Mammary epithelial cell (primary cell): ENCODE measurements at regions of chr3 and their contacts with region 1.

Region 1: GRCh38 chr3:171690281-171690680 is 120.0 kb downstream of the PLD1 start:
- DNase-seq: no peak
- H3K4me3 ChIP-seq: no peak overlapping the region
- H3K27ac ChIP-seq: no peak overlapping the region
- H3K4me1 ChIP-seq: no peaks in the 10 kb centered on the region
- H3K27me3 ChIP-seq: no peaks in the 10 kb centered on the region
- CTCF ChIP-seq: no peak

Region 2: DNA sequence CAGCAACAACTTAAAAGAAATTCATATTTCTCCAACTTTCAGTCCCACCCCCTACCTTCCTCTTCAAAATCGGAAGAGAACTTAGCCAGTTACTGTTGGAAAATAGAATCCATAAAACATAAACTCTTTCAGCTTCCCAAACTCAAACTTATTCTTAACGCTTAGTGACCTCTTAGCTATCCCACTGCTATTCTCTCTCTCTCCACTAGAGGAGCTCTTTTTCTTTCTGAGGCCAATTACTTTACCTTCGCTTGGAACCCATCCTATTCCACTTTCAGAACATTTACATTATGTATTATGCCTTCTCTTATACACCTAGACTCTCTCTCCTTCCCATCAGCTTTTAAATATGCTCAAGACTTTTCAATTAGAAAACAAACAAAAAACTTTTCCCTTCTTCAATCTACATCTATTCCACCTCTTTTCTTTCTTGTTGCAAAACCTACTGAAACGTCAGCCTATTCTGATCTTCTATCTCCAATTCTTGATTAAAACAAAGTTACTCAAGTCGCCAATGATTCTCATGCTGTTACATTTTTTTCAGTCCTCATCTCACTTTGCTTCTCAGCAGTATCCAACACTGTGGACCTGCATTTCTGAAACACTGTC is 771.4 kb after region 1 on chr3:
- CTCF ChIA-PET with region 1: interaction called, 17 read pairs
- dilution Hi-C with region 1: no loop called
- in situ Hi-C with region 1: no loop called
- intact Hi-C with region 1: no loop called
- DNase-seq: peak; percentile 36
- H3K4me3 ChIP-seq: no peak overlapping the region
- H3K27ac ChIP-seq: no peak overlapping the region
- H3K4me1 ChIP-seq: no peaks in the 10 kb centered on the region
- H3K27me3 ChIP-seq: no peaks in the 10 kb centered on the region
- CTCF ChIP-seq: peak; percentile 92 to 97